ENCODE measurements at regions of chr12 and their contacts with region 1.

Region 1: DNA sequence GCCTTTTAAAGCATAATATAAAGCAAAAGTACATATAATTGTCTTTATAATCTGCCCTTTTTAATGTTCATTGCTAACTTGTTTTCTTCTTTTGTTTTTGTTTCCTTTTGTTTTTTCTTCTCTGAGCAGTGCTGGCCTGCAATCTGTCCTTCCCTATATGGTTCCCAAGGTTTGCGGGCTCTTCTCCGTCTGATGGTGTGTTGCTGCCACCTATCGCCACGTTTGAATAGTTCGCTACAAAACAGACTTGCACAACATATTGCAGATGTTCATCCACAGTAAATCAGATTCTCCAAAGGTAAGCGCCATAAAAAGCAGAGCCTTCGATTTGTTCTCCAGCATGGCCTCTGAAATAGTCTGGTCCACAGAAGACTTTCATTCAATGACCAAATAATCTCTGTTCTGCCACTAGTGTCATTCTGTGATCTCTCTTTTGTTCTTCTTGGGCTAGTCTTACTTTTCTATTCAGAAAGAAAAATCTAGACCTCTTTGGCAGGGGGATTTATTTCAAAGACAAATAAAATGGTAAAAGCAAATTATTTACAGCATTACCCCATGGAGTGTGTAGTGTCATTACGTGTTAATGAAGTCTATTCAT is 33.5 kb downstream of the C12orf50 start:
- DNase-seq: peak; percentile 79
- ATAC-seq: peak; percentile 98
- H3K4me3 ChIP-seq: no peak overlapping the region
- H3K27ac ChIP-seq: no peak overlapping the region
- H3K4me1 ChIP-seq: 0 out of 2 replicates have a peak, but pooled peaks cover 4% of the 10 kb centered on the region
- H3K27me3 ChIP-seq: no peaks in the 10 kb centered on the region
- CTCF ChIP-seq: peak; percentile 91

Region 2: DNA sequence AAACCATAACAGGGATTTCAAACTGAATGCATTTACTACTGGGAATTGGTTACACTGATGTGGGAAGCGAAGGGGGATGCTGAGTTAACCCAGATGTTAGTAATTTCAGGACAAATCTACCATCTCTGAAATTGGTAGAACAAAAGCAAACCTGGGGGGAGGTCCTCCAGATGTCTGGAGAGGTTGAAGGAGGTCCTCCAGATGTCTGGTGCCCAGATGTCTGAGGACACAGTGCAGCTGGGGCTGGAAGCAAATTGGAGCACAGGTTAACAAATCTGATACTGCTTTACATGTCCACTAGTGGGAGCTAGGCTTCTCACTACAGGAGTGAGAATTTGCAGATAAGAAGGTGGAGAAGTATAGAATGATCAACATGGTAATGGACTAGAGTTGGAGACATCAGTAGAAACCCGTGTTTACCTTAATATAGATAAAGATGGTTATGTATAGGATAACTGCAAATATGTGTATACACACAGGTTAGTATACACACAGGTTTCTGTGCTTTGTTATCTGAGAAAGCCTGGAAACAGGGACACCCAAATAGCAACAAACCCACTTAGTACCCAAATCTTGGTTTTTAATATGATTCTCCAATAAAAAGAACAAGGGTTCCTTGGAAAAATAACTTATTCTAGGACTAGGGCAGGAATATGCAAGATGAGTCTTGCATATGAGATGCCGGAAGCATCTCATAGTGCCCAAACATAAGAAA is 128.9 kb before region 1 on chr12:
- CTCF ChIA-PET with region 1: no interaction called
- POLR2A ChIA-PET with region 1: no interaction called
- intact Hi-C with region 1: loop called (anchors 1 kb)
- DNase-seq: peak; percentile 55
- ATAC-seq: peak; percentile 66
- H3K4me3 ChIP-seq: no peak overlapping the region
- H3K27ac ChIP-seq: no peak overlapping the region
- H3K4me1 ChIP-seq: no peaks in the 10 kb centered on the region
- H3K27me3 ChIP-seq: no peaks in the 10 kb centered on the region
- CTCF ChIP-seq: peak; percentile 75

Region 3: DNA sequence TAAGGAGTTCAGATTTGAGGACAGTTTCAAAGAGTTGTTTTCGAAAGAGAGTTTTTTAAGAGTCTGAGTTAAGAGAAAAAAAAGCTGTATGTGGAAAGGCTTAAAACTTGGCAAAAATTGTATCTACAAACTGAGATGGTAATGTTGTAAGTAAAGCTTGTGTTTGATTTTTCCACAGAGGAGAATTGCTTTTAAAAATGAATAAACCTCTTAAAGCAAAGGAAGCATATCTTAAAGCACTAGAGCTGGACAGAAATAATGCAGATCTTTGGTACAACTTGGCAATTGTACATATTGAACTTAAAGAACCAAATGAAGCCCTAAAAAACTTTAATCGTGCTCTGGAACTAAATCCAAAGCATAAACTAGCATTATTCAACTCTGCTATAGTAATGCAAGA is 196.7 kb after region 1 on chr12:
- CTCF ChIA-PET with region 1: no interaction called
- POLR2A ChIA-PET with region 1: no interaction called
- intact Hi-C with region 1: no loop called
- DNase-seq: no peak
- ATAC-seq: no peak
- H3K4me3 ChIP-seq: no peak overlapping the region
- H3K27ac ChIP-seq: no peak overlapping the region
- H3K4me1 ChIP-seq: peaks cover 14% of the 10 kb centered on the region
- H3K27me3 ChIP-seq: no peaks in the 10 kb centered on the region
- CTCF ChIP-seq: no peak

Region 4: GRCh38 chr12:88351121-88351520 is 355.4 kb after region 1 on chr12:
- CTCF ChIA-PET with region 1: no interaction called
- POLR2A ChIA-PET with region 1: no interaction called
- intact Hi-C with region 1: no loop called
- DNase-seq: no peak
- ATAC-seq: no peak
- H3K4me3 ChIP-seq: no peak overlapping the region
- H3K27ac ChIP-seq: no peak overlapping the region
- H3K4me1 ChIP-seq: no peaks in the 10 kb centered on the region
- H3K27me3 ChIP-seq: no peaks in the 10 kb centered on the region
- CTCF ChIP-seq: no peak

Region 5: DNA sequence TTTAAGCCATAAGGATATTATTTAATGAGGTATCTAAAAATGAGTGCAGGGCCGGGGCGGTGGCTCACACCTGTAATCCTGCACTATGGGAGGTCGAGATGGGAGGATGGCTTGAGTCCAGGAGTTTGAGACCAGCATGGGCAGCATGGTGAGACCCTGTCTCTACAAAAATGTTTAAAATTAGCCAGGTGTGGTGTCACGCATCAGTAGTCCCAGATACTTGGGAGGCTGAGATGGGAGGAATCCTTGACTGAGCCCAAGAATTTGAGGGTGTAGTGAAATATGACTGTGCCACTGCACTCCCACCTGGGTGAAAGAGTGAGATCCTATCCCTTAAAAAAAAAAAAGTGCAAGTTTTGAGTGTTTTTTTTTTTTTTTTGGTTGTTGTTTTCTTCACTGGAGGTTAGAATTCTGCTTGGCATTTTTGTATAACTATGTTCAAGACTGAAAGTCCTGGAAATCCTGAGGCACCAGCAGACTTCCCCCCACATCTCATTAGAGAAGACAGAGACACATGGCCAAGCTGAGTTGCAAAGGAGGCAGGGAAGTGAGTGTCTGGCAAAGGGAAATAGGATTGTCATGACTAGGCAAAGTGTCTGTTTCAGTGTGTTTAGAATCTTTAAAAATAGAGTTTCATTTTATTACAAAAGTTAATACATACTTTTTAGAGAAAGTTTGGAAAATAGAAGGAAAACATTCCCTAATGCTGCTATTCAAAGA is 1410.1 kb after region 1 on chr12:
- CTCF ChIA-PET with region 1: interaction called, 11 read pairs
- POLR2A ChIA-PET with region 1: no interaction called
- intact Hi-C with region 1: no loop called
- DNase-seq: no peak
- ATAC-seq: no peak
- H3K4me3 ChIP-seq: no peak overlapping the region
- H3K27ac ChIP-seq: no peak overlapping the region
- H3K4me1 ChIP-seq: no peaks in the 10 kb centered on the region
- H3K27me3 ChIP-seq: no peaks in the 10 kb centered on the region
- CTCF ChIP-seq: no peak

Measured in PC-3 (cell line).